ENCODE measurements at regions of chr12 and their contacts with region 1.

Region 1: GRCh38 chr12:49553512-49554088 is 14.3 kb downstream of the MCRS1 start:
- DNase-seq: peak; percentile 44
- H3K4me3 ChIP-seq: no peak overlapping the region
- H3K27ac ChIP-seq: no peak overlapping the region
- H3K4me1 ChIP-seq: peaks cover 6% of the 10 kb centered on the region
- H3K27me3 ChIP-seq: peaks cover 0 to 2% of the 10 kb centered on the region in 2 experiments
- CTCF ChIP-seq: peak; percentile 30 to 34
- POLR2A ChIP-seq: no peak

Region 2: DNA sequence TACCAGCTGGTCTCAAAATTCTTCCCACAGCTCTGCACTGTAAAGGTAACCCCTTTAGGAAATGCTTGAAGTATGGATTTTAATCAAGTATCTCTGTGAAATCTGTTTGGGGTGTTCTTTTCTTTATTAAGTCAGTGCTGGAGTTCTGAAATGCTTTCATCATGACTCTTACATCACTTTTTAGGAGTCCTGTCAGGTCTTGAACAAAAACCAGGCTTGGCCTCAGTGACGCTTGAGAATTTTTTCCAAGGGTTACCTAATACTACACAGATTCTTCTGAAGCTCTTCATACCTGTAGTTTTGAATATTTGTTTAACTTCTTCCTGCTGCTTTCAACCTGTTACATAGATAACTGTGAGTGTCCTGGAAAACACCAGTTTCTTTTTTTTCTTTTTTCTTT is 61.8 kb before region 1 on chr12:
- CTCF ChIA-PET with region 1: no interaction called
- POLR2A ChIA-PET with region 1: no interaction called
- dilution Hi-C with region 1: no loop called
- intact Hi-C with region 1: no loop called
- DNase-seq: no peak
- H3K4me3 ChIP-seq: no peak overlapping the region
- H3K27ac ChIP-seq: no peak overlapping the region
- H3K4me1 ChIP-seq: peaks cover 23% of the 10 kb centered on the region
- H3K27me3 ChIP-seq: no peaks in the 10 kb centered on the region
- CTCF ChIP-seq: no peak
- POLR2A ChIP-seq: no peak

Region 3: DNA sequence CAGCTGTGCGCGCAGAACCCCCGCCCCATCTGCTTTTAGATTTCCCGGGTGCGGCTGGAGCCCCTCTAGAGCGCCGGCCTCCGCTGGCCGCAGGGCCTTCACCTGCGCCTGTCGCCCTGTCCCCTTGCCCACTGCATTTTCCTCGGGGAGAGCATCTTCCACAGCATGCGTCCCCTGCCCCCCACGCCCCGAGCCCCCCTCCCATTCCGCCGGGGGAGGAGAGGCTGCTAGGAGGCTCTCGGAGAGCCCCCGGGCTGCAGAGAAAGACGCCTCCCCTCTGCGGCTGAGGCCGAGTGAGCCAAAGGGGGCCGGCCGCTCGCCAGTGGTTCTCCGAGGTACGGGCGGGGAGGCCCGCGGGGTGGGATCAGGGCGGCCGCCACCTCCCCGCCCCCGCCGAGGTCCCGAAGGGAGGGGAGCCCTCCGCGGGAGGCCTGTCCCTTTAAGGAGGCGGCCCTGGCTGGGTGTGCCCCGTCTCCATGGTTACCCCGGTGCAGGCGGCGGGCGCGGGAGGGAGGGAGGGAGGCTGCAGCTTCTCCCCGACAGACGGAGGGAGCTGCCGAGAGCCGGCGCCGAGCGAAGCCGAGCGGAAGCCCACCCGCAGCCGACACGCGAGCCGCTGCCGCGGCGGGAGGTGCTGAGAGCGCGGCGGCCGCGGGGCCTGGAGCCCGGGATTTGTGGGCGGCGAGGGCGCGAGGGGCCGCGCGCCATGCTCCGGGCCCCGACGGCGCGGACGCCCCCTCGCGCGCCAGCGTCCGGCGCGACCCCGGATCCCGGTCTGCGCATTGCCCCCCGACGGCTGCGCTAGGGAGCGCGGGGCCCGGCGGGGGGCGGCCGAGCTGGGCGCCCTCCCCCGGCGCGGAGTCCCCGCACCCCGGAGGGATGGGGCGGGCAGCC is 14.8 kb before region 1 on chr12 and contains the start of gene KCNH3:
- CTCF ChIA-PET with region 1: interaction called, 14 read pairs
- POLR2A ChIA-PET with region 1: no interaction called
- dilution Hi-C with region 1: no loop called
- intact Hi-C with region 1: no loop called
- DNase-seq: peak; percentile 29
- H3K4me3 ChIP-seq: peak within 1 kb of the TSS in 1 of 3 experiments; percentile 17
- H3K27ac ChIP-seq: no peak within 1 kb of the TSS
- H3K4me1 ChIP-seq: peaks cover 8% of the 10 kb centered on the region
- H3K27me3 ChIP-seq: peaks cover 20 to 35% of the 10 kb centered on the region in 2 experiments
- CTCF ChIP-seq: no peak
- POLR2A ChIP-seq: no peak
- total RNA-seq, gene KCNH3: 0.13 and 0.18 TPM in 2 replicates

Region 4: DNA sequence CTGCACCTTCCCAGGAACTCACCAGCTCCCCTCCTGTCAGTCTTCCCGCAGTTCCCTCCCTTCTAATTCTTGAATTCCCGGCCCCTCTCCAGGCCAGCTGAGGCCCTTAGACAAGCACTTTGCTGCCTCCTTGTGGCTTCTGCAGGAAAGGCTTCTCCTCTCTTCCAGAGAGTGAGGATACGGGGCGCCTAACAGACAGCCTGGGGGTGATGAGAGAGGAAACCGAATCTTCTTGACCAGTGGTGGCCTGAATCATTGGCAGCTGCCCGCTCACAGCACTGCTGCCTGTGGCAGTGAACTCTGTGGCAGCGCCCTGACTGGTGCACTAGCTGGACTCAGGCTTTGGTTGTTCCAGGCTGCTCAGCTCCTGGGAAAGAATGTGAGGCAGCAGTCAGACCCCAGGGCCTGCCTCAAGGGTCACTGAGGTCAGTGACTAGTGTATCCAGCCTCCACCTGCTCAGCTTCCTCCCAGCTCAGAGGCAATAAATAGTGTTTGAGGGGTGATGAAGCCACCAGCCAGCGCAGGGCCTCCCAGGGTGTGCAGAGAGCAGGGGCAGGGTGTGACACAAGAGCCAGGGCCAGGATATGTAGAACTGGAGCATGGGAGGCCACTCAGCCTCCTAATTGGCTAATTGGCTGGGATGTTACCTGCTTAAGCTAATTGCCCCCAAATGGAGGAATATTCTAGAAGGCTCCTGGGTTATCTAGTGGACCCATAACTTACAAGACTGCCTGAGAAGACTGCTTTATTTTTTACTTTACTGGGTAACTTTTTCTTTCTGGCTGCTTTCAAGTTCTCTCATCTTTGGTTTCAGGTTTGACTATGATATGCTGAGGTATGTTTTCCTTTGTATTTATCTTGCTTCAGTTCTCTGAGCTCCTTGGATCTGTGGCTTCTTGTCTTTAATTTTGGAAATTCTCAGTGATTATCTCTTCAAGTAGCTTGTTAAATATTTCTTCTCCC is 27.3 kb after region 1 on chr12:
- CTCF ChIA-PET with region 1: interaction called, 44 read pairs
- POLR2A ChIA-PET with region 1: no interaction called
- dilution Hi-C with region 1: no loop called
- intact Hi-C with region 1: loop called (anchors 1 kb)
- DNase-seq: peak; percentile 65
- H3K4me3 ChIP-seq: no peak overlapping the region
- H3K27ac ChIP-seq: no peak overlapping the region
- H3K4me1 ChIP-seq: no peaks in the 10 kb centered on the region
- H3K27me3 ChIP-seq: no peaks in the 10 kb centered on the region
- CTCF ChIP-seq: peak; percentile 89 to 90
- POLR2A ChIP-seq: no peak